Activated naive CD4-positive, alpha-beta T cell treated with anti-CD3 and anti-CD28 coated beads for 36 hours (primary cell): ENCODE measurements at regions of chr6 and their contacts with region 1.

Region 1: DNA sequence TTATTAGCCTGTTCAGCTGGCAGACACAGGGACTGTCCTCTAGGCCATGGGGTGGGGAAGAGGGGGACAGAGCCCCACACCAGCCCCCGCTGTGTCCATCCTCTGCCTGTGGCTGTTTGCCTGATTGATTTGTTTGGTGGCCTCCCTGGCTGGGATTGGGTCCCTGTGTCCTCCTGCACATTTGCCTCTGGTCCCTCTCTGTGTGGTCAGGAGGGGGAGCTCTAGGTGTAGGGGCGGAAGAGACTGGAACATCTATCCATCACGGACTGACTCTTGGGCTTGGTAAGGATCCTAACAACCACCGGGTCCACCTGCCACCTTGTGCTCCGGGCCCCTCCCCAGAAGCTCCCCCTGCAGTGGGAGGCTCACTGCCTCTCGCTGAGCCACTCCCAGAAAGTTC is 38.4 kb upstream of the CCDC167 start:
- DNase-seq: no peak
- H3K4me3 Mint-ChIP-seq: no peak overlapping the region
- H3K27ac Mint-ChIP-seq: no peak overlapping the region
- H3K4me1 Mint-ChIP-seq: peaks cover 8% of the 10 kb centered on the region
- H3K27me3 Mint-ChIP-seq: no peaks in the 10 kb centered on the region

Region 2: DNA sequence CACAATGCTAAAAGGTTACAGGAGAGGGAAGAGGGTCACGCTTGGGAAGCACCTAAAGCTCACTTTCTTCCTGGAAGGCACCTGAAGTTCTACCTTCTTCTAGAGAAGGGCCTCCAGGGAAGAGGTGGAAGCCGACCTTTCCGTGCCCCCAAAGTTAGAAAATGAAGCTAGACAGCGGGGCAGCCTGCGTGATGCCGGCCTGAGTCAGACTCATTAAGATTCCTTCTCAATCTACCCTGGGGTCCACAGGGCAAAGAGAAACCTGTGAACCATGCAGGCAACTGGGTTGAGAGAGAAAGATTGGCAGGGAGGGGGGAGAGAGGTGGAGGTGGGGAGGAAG is 16.3 kb after region 1 on chr6:
- CTCF ChIA-PET with region 1: interaction called, 12 read pairs
- intact Hi-C with region 1: loop called (anchors 2 kb)
- DNase-seq: no peak
- H3K4me3 Mint-ChIP-seq: no peak overlapping the region
- H3K27ac Mint-ChIP-seq: no peak overlapping the region
- H3K4me1 Mint-ChIP-seq: peaks cover 38% of the 10 kb centered on the region
- H3K27me3 Mint-ChIP-seq: no peaks in the 10 kb centered on the region